ENCODE measurements at regions of chr1 and their contacts with region 1.

Region 1: GRCh38 chr1:89719502-89720306 is 86.8 kb downstream of the LRRC8C start:
- DNase-seq: no peak
- H3K4me3 Mint-ChIP-seq: no peak overlapping the region
- H3K27ac Mint-ChIP-seq: peak overlapping the region; percentile 97
- H3K4me1 Mint-ChIP-seq: peaks cover 92% of the 10 kb centered on the region
- H3K27me3 Mint-ChIP-seq: no peaks in the 10 kb centered on the region

Region 2: DNA sequence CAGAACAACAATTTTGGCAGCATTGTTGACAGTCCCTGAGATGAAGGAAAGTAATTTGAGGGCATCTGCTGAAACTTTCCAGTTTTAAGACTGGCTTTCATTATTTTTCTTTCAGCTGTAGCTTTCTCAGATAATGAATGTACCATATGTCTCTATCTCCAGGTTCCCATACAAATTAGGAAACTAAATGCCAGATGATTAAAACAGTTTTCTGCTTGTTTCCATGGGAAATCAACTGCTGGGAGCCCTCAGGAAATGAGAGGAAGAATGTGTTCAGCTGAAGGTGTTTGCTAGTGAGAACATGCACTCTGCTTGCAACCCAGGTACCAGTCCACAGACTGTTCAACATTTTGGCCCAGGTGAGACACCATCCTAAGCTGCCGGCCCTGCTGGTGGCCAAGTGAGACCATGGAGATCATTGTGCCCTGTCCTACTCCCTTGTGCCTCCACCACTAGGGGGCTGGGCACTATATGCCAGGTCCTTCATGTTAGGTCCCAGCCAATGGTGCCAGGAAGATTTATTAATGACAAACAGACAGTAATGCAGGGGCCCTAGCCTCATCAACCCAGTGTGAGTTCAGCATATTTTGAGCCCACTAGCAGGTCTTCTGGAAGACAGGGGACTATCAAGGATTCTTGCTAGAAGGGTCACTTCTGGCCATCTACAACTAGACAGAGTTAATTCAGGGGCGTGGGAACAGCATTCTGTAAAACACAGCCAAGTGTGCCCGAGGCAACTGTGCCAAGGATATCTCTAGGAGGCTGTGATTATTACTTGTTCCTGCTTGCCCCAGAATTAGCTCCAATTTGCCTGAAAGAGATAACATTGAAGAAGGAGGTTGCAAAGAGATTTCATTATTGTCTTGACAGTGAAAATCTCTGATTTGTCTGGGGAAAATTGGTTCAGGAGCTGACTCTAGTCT is 103.8 kb before region 1 on chr1:
- CTCF ChIA-PET with region 1: interaction called, 12 read pairs
- POLR2A ChIA-PET with region 1: interaction called, 12 read pairs
- intact Hi-C with region 1: loop called (anchors 1 kb)
- DNase-seq: peak; percentile 33
- H3K4me3 Mint-ChIP-seq: no peak overlapping the region
- H3K27ac Mint-ChIP-seq: no peak overlapping the region
- H3K4me1 Mint-ChIP-seq: peaks cover 82% of the 10 kb centered on the region
- H3K27me3 Mint-ChIP-seq: no peaks in the 10 kb centered on the region

Region 3: DNA sequence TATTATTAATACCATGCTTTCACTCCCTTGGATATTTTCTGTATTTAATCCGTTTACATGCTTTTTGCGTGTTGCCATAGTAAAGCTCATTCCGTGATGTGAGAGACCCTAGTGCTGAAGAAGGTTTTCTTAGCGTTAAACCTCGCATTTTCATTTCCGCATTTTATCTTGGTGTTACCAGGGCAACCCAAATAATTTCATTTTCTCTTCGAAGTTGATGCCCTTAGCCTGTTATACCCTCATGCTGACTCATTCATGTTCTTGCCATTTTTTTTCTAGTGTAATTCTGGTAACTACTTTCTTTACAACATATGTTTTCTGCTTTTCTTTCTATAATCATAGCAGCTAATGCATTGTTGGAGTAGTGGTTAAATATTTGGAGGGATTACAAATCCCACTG is 49.5 kb before region 1 on chr1:
- CTCF ChIA-PET with region 1: interaction called, 9 read pairs
- POLR2A ChIA-PET with region 1: interaction called, 10 read pairs
- intact Hi-C with region 1: loop called (anchors 1 kb)
- DNase-seq: no peak
- H3K4me3 Mint-ChIP-seq: peak overlapping the region; percentile 53
- H3K27ac Mint-ChIP-seq: peak overlapping the region; percentile 66
- H3K4me1 Mint-ChIP-seq: peaks cover 93% of the 10 kb centered on the region
- H3K27me3 Mint-ChIP-seq: no peaks in the 10 kb centered on the region

Region 4: GRCh38 chr1:89692601-89693521 is 26.8 kb before region 1 on chr1:
- CTCF ChIA-PET with region 1: interaction called, 6 read pairs
- POLR2A ChIA-PET with region 1: interaction called, 6 read pairs
- intact Hi-C with region 1: loop called (anchors 1 kb)
- DNase-seq: no peak
- H3K4me3 Mint-ChIP-seq: no peak overlapping the region
- H3K27ac Mint-ChIP-seq: peak overlapping the region; percentile 86
- H3K4me1 Mint-ChIP-seq: peaks cover 93% of the 10 kb centered on the region
- H3K27me3 Mint-ChIP-seq: no peaks in the 10 kb centered on the region

Region 5: GRCh38 chr1:89757532-89757931 is 37.8 kb after region 1 on chr1:
- CTCF ChIA-PET with region 1: interaction called, 41 read pairs
- POLR2A ChIA-PET with region 1: interaction called, 21 read pairs
- intact Hi-C with region 1: loop called (anchors 1 kb)
- DNase-seq: peak; percentile 82
- H3K4me3 Mint-ChIP-seq: peak overlapping the region; percentile 57
- H3K27ac Mint-ChIP-seq: peak overlapping the region; percentile 77
- H3K4me1 Mint-ChIP-seq: peaks cover 74% of the 10 kb centered on the region
- H3K27me3 Mint-ChIP-seq: no peaks in the 10 kb centered on the region

Region 6: GRCh38 chr1:89833183-89834082 is 113.7 kb after region 1 on chr1:
- CTCF ChIA-PET with region 1: no interaction called
- POLR2A ChIA-PET with region 1: no interaction called
- intact Hi-C with region 1: no loop called
- DNase-seq: no peak
- H3K4me3 Mint-ChIP-seq: no peak overlapping the region
- H3K27ac Mint-ChIP-seq: no peak overlapping the region
- H3K4me1 Mint-ChIP-seq: peaks cover 6% of the 10 kb centered on the region
- H3K27me3 Mint-ChIP-seq: no peaks in the 10 kb centered on the region